ENCODE measurements at regions of chr1 and their contacts with region 1.

Region 1: DNA sequence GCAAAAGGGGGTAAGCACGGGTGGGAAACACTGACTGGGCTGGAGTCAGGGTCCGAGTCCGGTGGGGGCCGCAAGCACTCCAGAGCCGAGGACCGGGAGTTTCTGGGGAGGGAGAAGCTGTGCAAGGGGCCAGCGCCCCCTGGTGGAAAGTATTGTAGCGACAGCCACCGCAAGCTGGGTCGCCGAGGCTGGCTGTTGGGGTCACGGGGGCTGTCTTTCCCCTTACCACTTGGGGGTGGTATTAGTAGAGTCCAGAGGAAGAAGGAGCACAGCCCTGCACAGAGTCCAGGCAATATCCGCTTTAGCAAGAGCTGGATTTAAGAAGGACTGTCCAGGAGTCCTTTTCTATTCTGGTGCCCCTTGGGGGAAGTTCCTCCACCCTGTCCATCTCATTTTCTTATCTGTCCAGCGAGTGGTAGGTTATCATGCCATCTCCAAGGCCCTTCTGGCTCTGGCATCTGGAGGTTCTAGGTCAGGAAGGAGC is 17.9 kb upstream of the ETV3 start:
- DNase-seq: peak; percentile 61 to 85 (median 82)
- H3K4me3 ChIP-seq: no peak overlapping the region
- H3K27ac ChIP-seq: no peak overlapping the region
- H3K4me1 ChIP-seq: peaks cover 7% of the 10 kb centered on the region
- H3K27me3 ChIP-seq: no peaks in the 10 kb centered on the region
- CTCF ChIP-seq: peak; percentile 87 to 96 (median 92)
- EP300 ChIP-seq: no peak
- POLR2A ChIP-seq: no peak

Region 2: DNA sequence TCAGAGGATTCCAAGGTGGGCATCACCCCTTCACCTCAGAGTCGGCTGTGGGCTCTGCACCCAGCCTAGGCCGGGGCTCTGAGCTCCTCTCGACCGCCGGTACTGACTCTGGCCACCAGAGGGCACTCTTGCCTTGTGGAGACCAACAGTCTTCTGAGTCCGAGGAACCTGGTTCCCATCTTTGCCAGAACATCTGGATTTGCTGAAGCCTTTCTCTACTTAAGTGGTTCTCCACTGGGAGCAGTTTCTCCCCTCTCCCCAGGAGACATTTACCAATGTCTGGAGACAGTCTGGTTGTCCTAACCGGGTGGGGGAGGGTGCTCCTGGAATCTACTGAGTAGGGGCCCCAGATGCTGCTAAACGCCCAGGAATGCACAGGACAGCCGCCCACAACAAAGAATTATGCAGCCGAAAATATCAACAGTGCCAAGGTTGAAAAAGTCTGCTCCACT is 65.9 kb before region 1 on chr1:
- intact Hi-C with region 1: loop called (anchors 1 to 2 kb)
- DNase-seq: peak; percentile 83 to 94 (median 92)
- H3K4me3 ChIP-seq: no peak overlapping the region
- H3K27ac ChIP-seq: no peak overlapping the region
- H3K4me1 ChIP-seq: no peaks in the 10 kb centered on the region
- H3K27me3 ChIP-seq: no peaks in the 10 kb centered on the region
- CTCF ChIP-seq: peak; percentile 84 to 86 (median 84)
- EP300 ChIP-seq: no peak
- POLR2A ChIP-seq: no peak